ENCODE measurements at regions of chr3 and their contacts with region 1.

Region 1: DNA sequence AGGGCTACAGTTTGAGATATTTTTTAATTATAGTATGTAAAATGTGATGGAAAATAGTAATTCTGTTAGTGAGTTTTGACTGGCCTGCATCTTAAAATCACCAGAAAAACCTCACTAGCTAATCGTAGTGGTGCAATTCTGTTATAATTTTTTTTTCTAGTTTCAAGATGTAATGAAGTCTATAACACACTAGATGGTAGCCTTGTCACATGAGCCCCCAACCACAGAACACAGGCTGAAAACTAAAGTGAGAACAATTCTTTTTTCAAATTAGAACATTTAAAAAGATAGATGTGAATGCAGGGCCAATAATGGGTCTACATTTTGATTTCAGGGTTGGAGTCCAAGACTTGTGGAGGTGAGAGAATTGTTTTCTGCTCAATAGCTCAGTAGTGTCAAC is 83.3 kb upstream of the KCNH8 start:
- DNase-seq: peak; percentile 31
- H3K4me3 ChIP-seq: no peak overlapping the region
- H3K27ac ChIP-seq: no peak overlapping the region
- H3K4me1 ChIP-seq: peaks cover 0 to 11% of the 10 kb centered on the region in 2 experiments; a peak in 2 of 4 replicates
- H3K27me3 ChIP-seq: no peaks in the 10 kb centered on the region
- CTCF ChIP-seq: peak; percentile 63
- EP300 ChIP-seq: no peak
- RAD21 ChIP-seq: peak; percentile 96

Region 2: DNA sequence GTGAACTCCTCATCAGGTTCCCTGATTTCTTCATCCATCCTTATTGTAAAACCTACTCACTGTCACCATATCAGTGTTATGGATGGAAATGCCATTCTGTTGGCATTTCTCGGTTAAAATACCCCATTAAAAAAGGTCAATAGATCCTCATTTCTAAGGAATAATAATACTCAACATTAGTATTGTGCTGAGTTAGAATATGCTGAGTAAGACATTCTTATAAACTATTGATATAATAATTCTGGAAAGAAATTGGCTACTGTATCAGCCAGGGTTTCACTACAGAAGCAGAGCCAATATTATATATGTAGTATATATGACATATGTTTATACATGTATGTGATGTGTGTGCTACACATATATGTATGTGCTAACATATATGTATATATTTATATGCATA is 12.2 kb before region 1 on chr3:
- CTCF ChIA-PET with region 1: interaction called, 25 read pairs
- POLR2A ChIA-PET with region 1: no interaction called
- DNase-seq: no peak
- H3K4me3 ChIP-seq: no peak overlapping the region
- H3K27ac ChIP-seq: no peak overlapping the region
- H3K4me1 ChIP-seq: 0 out of 4 replicates have a peak, but pooled peaks cover 0 to 7% of the 10 kb centered on the region in 2 experiments
- H3K27me3 ChIP-seq: no peaks in the 10 kb centered on the region
- CTCF ChIP-seq: no peak
- EP300 ChIP-seq: no peak
- RAD21 ChIP-seq: no peak

Region 3: GRCh38 chr3:19250959-19251610 is 186.1 kb after region 1 on chr3:
- CTCF ChIA-PET with region 1: interaction called, 17 read pairs
- POLR2A ChIA-PET with region 1: no interaction called
- DNase-seq: no peak
- H3K4me3 ChIP-seq: no peak overlapping the region
- H3K27ac ChIP-seq: no peak overlapping the region
- H3K4me1 ChIP-seq: no peaks in the 10 kb centered on the region
- H3K27me3 ChIP-seq: no peaks in the 10 kb centered on the region
- CTCF ChIP-seq: no peak
- EP300 ChIP-seq: no peak
- RAD21 ChIP-seq: peak; percentile 55

Region 4: DNA sequence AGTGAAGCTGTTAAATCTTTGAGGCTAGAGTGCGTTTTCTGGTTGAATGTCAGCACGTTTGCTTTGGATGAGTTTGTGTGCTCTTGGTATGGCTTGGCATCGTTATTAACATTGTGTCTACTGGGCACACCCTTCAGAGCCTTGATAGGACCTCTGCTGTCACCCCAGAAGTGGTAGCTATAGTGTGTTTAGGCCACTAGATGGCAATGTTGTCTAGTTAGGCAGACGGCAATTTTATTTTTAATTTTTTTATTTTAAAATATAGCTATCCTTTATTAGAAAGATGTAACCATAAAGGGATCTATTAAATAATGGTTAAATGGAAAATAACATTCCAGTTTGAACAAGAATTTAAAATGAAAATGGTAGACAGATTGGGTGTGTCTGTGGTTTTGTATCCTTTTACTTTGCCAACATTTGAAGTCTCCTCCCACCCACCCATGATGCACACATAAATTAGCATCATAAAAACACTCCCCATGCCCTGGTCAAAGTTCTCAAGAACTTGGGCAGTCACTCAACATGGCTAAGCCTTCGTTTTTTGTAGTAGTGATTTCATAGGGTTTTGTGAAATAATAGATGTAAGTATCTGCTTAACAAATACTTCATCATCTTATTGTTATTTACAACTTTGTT is 284.0 kb after region 1 on chr3:
- CTCF ChIA-PET with region 1: interaction called, 17 read pairs
- POLR2A ChIA-PET with region 1: no interaction called
- DNase-seq: peak; percentile 20
- H3K4me3 ChIP-seq: no peak overlapping the region; a peak in 1 of 4 replicates
- H3K27ac ChIP-seq: no peak overlapping the region
- H3K4me1 ChIP-seq: no peaks in the 10 kb centered on the region; a peak in 2 of 4 replicates
- H3K27me3 ChIP-seq: no peaks in the 10 kb centered on the region
- CTCF ChIP-seq: peak; percentile 67
- EP300 ChIP-seq: no peak
- RAD21 ChIP-seq: peak; percentile 72

Region 5: DNA sequence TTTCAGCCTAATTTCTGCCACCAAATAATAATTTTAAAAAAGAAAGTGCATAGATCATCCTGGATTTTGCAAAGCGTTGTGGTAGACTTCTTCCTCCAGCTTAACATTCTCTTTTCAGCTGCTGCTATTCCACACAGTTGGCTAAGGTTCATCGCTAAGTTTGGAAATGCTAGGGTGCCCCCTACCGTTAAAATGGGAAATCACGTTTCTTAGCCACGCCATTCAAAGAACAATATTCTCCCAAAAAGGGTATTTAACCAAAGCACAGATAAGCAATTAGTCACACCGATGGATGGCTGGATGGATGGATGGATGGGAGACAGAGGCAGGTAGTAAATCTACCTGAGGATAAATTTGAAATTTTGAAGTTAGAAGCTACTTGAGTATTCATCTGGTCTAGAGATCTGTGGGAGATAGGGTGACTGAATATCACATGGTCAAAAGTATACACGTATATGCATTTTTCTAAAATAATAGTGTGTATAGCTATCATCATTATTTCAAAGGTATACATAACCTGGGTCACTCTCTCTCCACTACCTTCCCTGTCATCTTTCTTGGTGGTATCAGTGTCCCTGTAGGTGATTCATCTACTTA is 801.8 kb after region 1 on chr3:
- CTCF ChIA-PET with region 1: interaction called, 54 read pairs
- POLR2A ChIA-PET with region 1: no interaction called
- DNase-seq: peak; percentile 61
- H3K4me3 ChIP-seq: peak overlapping the region in 1 of 2 experiments; percentile 46; a peak in 1 of 4 replicates
- H3K27ac ChIP-seq: no peak overlapping the region
- H3K4me1 ChIP-seq: no peaks in the 10 kb centered on the region
- H3K27me3 ChIP-seq: no peaks in the 10 kb centered on the region
- CTCF ChIP-seq: peak; percentile 83
- EP300 ChIP-seq: no peak
- RAD21 ChIP-seq: peak; percentile 90